Heart left ventricle (tissue), 16 donors: ENCODE measurements at regions of chr13 and their contacts with region 1.

Region 1: GRCh38 chr13:39144941-39145533 is 106.8 kb downstream of the NHLRC3 start:
- DNase-seq: peak in 4 of 5 donors; percentile 47 to 65 (median 62)
- ATAC-seq: peak; percentile 57 to 77 (median 74)
- H3K4me3 ChIP-seq: peak overlapping the region in 7 of 12 donors; percentile 13 to 52 (median 21)
- H3K27ac ChIP-seq: peak overlapping the region in 6 of 12 donors; percentile 1 to 47 (median 23)
- H3K4me1 ChIP-seq: peaks cover 0 to 20% (median 0%) of the 10 kb centered on the region in 12 donors
- H3K27me3 ChIP-seq: no peaks in the 10 kb centered on the region
- CTCF ChIP-seq: peak; percentile 62 to 91 (median 84)
- POLR2A ChIP-seq: no peak

Region 2: DNA sequence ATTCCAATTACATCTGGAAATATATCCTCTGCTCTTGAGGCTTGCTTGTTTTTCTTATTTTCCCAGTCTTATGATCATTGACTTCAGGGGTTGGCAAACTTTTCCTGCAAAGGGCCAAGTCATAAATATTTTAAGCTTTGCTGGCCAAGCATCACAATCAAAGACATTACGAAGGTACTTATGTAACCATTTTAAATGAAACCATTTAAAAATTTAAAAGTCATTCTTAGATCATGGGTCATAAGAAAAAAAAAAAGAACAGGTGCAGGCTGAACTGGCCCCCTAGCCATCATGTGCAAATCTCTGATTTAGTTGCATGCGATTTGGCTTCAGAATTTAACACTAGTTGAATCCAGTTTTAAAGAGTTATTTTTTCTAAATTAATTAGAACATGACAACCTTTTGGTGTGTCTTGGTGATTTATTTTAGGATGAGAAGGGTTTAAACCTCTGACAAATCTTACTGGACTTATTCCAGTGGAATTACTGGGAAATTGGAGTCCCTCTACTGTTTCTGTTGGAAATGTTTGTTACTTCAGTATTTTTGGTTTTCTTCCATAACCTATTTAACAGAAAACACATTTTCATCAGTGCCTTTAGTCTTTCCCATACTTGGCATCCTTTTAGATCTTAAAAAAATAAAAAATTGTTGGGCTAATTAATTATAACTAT is 41.3 kb after region 1 on chr13:
- intact Hi-C with region 1: no loop called
- DNase-seq: peak in 1 of 5 donors; percentile 13
- ATAC-seq: peak in 3 of 4 donors; percentile 53 to 80 (median 66)
- H3K4me3 ChIP-seq: no peak overlapping the region
- H3K27ac ChIP-seq: peak overlapping the region in 10 of 12 donors; percentile 9 to 75 (median 52)
- H3K4me1 ChIP-seq: peaks cover 0 to 28% (median 0%) of the 10 kb centered on the region in 12 donors
- H3K27me3 ChIP-seq: no peaks in the 10 kb centered on the region
- CTCF ChIP-seq: no peak
- POLR2A ChIP-seq: no peak

Region 3: GRCh38 chr13:39201180-39201579 is 56.1 kb after region 1 on chr13:
- intact Hi-C with region 1: no loop called
- DNase-seq: peak; percentile 34 to 64 (median 39)
- ATAC-seq: peak in 2 of 4 donors; percentile 34 to 48
- H3K4me3 ChIP-seq: no peak overlapping the region
- H3K27ac ChIP-seq: peak overlapping the region in 7 of 12 donors; percentile 1 to 61 (median 45)
- H3K4me1 ChIP-seq: peaks cover 0 to 27% (median 12%) of the 10 kb centered on the region in 12 donors
- H3K27me3 ChIP-seq: no peaks in the 10 kb centered on the region
- CTCF ChIP-seq: no peak
- POLR2A ChIP-seq: no peak

Region 4: DNA sequence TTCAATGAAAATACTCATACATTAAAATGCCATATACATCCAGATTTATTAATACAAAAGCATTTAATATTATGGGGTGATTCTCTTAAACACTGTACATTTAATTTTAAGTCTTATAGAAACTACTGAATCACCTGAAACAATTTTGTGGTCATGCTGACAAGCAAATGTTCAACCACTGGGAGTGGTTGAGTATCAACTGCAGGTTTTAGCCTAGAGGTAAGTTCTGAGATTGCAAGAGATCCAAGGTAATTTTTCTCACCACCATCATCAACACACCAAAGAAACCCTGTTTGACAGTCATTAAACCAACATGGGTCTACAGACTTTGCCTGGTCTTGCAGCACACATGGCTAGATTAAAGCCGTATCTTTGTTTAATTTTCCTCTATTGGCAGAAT is 261.7 kb after region 1 on chr13:
- intact Hi-C with region 1: loop called in 5 of 10 experiments (anchors 5 to 10 kb)
- DNase-seq: no peak
- ATAC-seq: no peak
- H3K4me3 ChIP-seq: no peak overlapping the region
- H3K27ac ChIP-seq: no peak overlapping the region
- H3K4me1 ChIP-seq: peaks cover 0 to 84% (median 57%) of the 10 kb centered on the region in 12 donors
- H3K27me3 ChIP-seq: no peaks in the 10 kb centered on the region
- CTCF ChIP-seq: no peak
- POLR2A ChIP-seq: no peak